Dendritic cell treated with granulocyte-macrophage colony-stimulating factor and Interleukin-4, amounts not matched to agents 40 ng/mL and 50 ng/mL, for 4 days (primary cell): ENCODE measurements at regions of chr6 and their contacts with region 1.

Region 1: GRCh38 chr6:593139-593906 is 63.6 kb downstream of the HUS1B start:
- H3K4me3 Mint-ChIP-seq: no peak overlapping the region
- H3K27ac Mint-ChIP-seq: no peak overlapping the region
- H3K4me1 Mint-ChIP-seq: no peaks in the 10 kb centered on the region
- H3K27me3 Mint-ChIP-seq: no peaks in the 10 kb centered on the region

Region 2: GRCh38 chr6:391559-392440 is 201.5 kb before region 1 on chr6 and contains the start of gene IRF4:
- intact Hi-C with region 1: no loop called
- H3K4me3 Mint-ChIP-seq: peak within 1 kb of the TSS; percentile 93
- H3K27ac Mint-ChIP-seq: peak within 1 kb of the TSS; percentile 83
- H3K4me1 Mint-ChIP-seq: peaks cover 52% of the 10 kb centered on the region
- H3K27me3 Mint-ChIP-seq: peaks cover 48% of the 10 kb centered on the region

Region 3: DNA sequence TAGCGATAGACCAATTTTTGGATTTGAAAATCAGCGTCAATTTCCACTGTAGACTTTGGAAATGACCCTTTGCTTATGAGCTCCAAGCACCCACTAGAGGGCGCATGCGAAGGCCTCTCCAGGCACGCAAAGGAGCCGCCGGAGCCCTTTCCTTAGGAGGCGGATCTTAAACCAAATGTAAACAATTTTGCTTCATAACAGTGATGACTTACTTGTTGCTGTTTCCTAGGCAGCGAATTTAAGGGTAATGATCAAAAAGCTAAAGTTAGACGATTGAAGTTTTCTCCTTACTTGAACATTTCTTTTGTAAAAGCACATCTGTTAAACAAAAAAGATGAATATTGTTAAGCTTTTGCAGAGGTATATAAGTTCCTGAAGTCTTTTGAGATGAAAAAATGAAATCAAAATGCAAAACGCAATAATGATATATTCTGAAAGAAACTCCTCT is 128.8 kb after region 1 on chr6:
- intact Hi-C with region 1: loop called (anchors 5 kb)
- H3K4me3 Mint-ChIP-seq: no peak overlapping the region
- H3K27ac Mint-ChIP-seq: no peak overlapping the region
- H3K4me1 Mint-ChIP-seq: no peaks in the 10 kb centered on the region
- H3K27me3 Mint-ChIP-seq: peaks cover 31% of the 10 kb centered on the region

Region 4: GRCh38 chr6:1436334-1437306 is 843.3 kb after region 1 on chr6:
- intact Hi-C with region 1: loop called (anchors 2 kb)
- H3K4me3 Mint-ChIP-seq: no peak overlapping the region
- H3K27ac Mint-ChIP-seq: no peak overlapping the region
- H3K4me1 Mint-ChIP-seq: no peaks in the 10 kb centered on the region
- H3K27me3 Mint-ChIP-seq: peaks cover 39% of the 10 kb centered on the region